HEK293 (cell line): ENCODE measurements at regions of chr18 and their contacts with region 1.

Region 1: DNA sequence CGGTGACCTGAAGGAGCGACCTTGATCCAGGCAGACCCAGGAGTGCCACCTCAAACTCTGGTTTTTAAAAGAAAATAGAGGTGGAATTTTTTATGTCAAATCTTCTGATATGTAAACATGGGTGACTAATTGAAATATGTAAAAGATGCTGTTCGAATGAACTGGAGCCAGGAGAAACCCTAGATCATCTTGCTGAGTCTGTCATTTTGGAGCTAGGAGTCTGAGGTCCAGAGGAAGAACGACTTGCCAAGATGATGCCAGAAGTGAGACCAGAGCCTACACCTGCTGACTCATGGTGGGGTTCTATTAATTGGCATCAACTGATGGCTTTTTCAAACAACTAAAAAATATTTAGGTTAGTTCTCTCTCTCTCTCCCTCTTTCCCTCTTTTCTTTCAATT is 74.1 kb downstream of the ACAA2 start:
- H3K4me3 ChIP-seq: no peak overlapping the region
- H3K27ac ChIP-seq: no peak overlapping the region
- H3K4me1 ChIP-seq: no peaks in the 10 kb centered on the region
- CTCF ChIP-seq: no peak

Region 2: GRCh38 chr18:49645841-49646351 is 93.4 kb before region 1 on chr18:
- CTCF ChIA-PET with region 1: no interaction called
- POLR2A ChIA-PET with region 1: no interaction called
- H3K4me3 ChIP-seq: no peak overlapping the region
- H3K27ac ChIP-seq: no peak overlapping the region
- H3K4me1 ChIP-seq: no peaks in the 10 kb centered on the region; the same call in none of the 2 replicates
- CTCF ChIP-seq: no peak

Region 3: DNA sequence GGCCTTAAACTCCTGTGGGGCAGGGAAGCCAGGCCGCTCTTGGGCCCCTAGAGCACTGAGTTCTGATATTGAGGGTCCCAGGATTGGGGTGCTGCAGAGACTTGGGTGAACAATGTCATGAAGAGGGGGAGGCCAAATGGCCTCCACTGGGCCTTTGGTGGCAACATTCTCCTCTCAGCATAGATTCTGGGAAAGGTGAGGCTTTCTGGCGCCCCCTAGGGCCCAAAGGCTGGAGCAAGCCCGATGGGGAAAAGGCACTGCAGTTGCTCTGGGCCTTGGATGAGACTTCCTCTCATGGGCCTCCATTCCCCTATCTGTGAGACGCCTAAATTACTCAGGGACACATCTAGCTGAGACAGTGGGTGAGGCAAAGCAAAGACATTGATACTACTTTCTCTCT is 10.7 kb before region 1 on chr18:
- CTCF ChIA-PET with region 1: interaction called, 19 read pairs
- POLR2A ChIA-PET with region 1: no interaction called
- H3K4me3 ChIP-seq: no peak overlapping the region
- H3K27ac ChIP-seq: no peak overlapping the region
- H3K4me1 ChIP-seq: peaks cover 19% of the 10 kb centered on the region
- CTCF ChIP-seq: peak; percentile 46; the same call in 1 of the 2 replicates